CD8-positive, alpha-beta T cell (primary cell): ENCODE measurements at regions of chr5 and their contacts with region 1.

Region 1: DNA sequence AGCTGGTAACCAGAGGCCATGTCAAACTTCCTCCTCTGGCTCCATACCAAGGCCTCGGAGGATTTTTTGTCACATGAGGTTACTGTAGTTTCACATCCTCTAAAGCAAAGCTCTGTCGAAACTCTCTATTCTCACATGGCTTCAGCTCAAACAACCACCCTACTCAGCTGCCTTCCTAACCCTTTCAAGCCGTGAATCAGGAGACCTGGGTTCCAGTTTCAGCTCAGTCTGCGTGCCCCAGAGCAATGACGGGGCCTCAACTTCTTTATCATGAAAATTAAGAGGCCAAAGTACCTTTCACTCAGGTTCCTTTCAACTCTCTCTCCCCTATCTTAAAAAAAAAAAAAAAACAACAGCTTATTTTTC is 145.2 kb upstream of the MAP3K1 start:
- DNase-seq: peak in 3 of 9 experiments; percentile 32 to 66 (median 59)
- ATAC-seq: peak; percentile 58
- H3K4me3 ChIP-seq: no peak overlapping the region
- H3K4me3 Mint-ChIP-seq: no peak overlapping the region
- H3K27ac ChIP-seq: peak overlapping the region in 1 of 2 experiments; percentile 40
- H3K27ac Mint-ChIP-seq: peak overlapping the region; percentile 88
- H3K4me1 ChIP-seq: peaks cover 16% of the 10 kb centered on the region
- H3K4me1 Mint-ChIP-seq: peaks cover 21% of the 10 kb centered on the region
- H3K27me3 ChIP-seq: no peaks in the 10 kb centered on the region
- H3K27me3 Mint-ChIP-seq: peaks cover 4% of the 10 kb centered on the region
- CTCF ChIP-seq: no peak

Region 2: DNA sequence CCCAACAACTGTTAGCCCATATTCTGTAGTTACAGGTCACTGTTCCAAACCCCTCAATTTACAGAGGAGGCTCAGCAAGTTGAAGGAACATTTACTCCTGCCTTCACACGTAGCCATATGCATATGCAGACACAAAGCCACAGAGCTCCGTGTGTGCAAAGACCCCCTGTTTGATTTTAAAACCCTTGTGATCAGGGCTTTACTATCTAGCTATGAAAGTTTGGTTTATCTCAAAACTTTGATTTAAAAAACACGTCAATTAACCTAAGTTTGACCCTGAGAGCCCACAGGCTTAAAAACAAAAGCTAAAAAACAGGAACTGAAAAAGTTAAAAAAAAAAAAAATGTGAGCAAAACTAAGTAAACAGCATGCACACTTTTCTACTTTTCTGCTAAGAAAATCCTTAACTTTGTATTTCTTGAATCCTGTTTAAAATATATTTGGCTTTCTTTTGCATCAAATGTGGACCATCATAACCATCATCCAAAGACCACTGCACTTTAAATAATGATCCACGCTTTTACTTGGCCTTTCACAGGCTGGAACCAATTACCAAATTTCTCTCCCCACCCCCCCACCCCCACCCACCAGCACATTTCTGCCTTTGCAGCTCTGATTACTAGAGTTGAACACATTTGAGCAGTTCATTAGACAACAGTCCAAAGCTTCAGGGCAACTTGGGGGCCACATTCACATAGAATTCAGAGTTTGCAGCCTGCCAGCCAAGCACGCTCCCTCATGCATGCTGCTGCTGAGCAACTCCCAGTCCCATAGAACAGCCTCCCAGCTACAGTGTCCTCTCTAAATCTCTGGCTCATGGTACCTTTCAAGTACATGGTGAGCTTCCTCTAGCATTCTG is 16.5 kb after region 1 on chr5:
- CTCF ChIA-PET with region 1: no interaction called
- POLR2A ChIA-PET with region 1: interaction called, 10 read pairs
- intact Hi-C with region 1: no loop called
- DNase-seq: peak in 1 of 9 experiments; percentile 26
- ATAC-seq: peak; percentile 26
- H3K4me3 ChIP-seq: no peak overlapping the region
- H3K4me3 Mint-ChIP-seq: peak overlapping the region; percentile 19
- H3K27ac ChIP-seq: peak overlapping the region in 1 of 2 experiments; percentile 29
- H3K27ac Mint-ChIP-seq: peak overlapping the region; percentile 39
- H3K4me1 ChIP-seq: peaks cover 25% of the 10 kb centered on the region
- H3K4me1 Mint-ChIP-seq: peaks cover 60% of the 10 kb centered on the region
- H3K27me3 ChIP-seq: no peaks in the 10 kb centered on the region
- H3K27me3 Mint-ChIP-seq: no peaks in the 10 kb centered on the region
- CTCF ChIP-seq: no peak